Activated T-helper 2 cell treated with anti-CD3 and anti-CD28 coated beads, Interferon-gamma antibody, Interleukin-2, Interleukin-4, amounts not matched to agents 10 μg/mL and 5 μg/mL and 100 μg/mL, durations not matched to agents 14 hours and 24 hours and 36 hours (primary cell): ENCODE measurements at regions of chr2 and their contacts with region 1.

Region 1: DNA sequence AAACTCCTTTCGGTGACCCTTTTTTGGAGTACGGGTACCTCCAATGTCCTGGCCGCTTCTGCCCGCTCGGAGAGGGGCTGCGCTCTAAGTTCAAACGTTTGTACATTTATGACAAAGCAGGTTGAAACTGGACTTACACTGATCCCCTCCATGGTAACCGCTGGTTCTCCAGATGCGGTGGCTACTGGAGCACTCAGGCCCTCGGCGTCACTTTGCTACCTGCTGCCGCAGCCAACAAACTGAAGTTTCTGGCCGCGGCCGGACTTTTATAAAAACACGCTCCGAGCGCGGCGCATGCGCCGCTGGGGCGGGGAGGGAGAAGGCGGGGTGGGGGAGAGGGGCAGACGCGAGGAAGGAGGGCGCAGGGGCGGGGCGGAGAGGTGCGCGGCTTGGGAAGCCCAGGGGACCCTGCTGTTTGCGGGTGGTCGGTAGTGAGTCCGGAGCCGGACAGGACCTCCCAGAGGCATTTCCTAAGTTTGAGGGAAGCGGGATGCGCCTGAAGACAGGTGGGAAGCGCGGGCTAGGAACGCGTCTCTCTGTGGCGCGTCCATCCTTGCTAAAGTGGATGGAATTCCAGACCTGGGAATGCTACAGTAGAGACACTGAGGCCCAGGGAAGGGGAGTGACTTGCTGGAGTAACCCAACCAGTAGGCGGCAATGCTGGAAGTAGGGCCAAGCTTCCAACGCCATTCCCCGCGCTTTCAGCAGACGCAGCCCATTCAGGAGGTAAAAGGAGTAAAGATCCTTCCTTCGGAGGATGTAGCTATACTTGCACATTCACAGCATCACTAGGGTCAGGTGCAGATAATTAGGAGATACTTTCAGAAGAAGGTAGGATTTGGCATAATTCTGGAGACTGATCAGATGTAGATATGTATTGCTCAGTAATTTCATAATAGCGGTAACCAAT is at the start of gene CXCR4:
- DNase-seq: peak; percentile 81
- H3K4me3 Mint-ChIP-seq: peak within 1 kb of the TSS; percentile 97
- H3K27ac Mint-ChIP-seq: peak within 1 kb of the TSS; percentile 96
- H3K4me1 Mint-ChIP-seq: peaks cover 49% of the 10 kb centered on the region
- H3K27me3 Mint-ChIP-seq: peaks cover 21% of the 10 kb centered on the region
- total RNA-seq, gene CXCR4: 140 and 144 TPM in 2 replicates

Region 2: GRCh38 chr2:134918526-134919340 is 1199.4 kb before region 1 on chr2 and contains the start of gene CCNT2:
- intact Hi-C with region 1: loop called (anchors 5 kb)
- DNase-seq: peak; percentile 100
- H3K4me3 Mint-ChIP-seq: peak within 1 kb of the TSS; percentile 99
- H3K27ac Mint-ChIP-seq: peak within 1 kb of the TSS; percentile 98
- H3K4me1 Mint-ChIP-seq: peaks cover 20% of the 10 kb centered on the region
- H3K27me3 Mint-ChIP-seq: peaks cover 3% of the 10 kb centered on the region
- total RNA-seq, gene CCNT2: 39.2 and 41.0 TPM in 2 replicates

Region 3: GRCh38 chr2:135876066-135876711 is 242.0 kb before region 1 on chr2 and contains the start of gene MCM6:
- intact Hi-C with region 1: loop called (anchors 5 kb)
- DNase-seq: peak; percentile 98
- H3K4me3 Mint-ChIP-seq: peak within 1 kb of the TSS; percentile 95
- H3K27ac Mint-ChIP-seq: peak within 1 kb of the TSS; percentile 92
- H3K4me1 Mint-ChIP-seq: peaks cover 37% of the 10 kb centered on the region
- H3K27me3 Mint-ChIP-seq: no peaks in the 10 kb centered on the region
- total RNA-seq, gene MCM6: 190 and 191 TPM in 2 replicates

Region 4: DNA sequence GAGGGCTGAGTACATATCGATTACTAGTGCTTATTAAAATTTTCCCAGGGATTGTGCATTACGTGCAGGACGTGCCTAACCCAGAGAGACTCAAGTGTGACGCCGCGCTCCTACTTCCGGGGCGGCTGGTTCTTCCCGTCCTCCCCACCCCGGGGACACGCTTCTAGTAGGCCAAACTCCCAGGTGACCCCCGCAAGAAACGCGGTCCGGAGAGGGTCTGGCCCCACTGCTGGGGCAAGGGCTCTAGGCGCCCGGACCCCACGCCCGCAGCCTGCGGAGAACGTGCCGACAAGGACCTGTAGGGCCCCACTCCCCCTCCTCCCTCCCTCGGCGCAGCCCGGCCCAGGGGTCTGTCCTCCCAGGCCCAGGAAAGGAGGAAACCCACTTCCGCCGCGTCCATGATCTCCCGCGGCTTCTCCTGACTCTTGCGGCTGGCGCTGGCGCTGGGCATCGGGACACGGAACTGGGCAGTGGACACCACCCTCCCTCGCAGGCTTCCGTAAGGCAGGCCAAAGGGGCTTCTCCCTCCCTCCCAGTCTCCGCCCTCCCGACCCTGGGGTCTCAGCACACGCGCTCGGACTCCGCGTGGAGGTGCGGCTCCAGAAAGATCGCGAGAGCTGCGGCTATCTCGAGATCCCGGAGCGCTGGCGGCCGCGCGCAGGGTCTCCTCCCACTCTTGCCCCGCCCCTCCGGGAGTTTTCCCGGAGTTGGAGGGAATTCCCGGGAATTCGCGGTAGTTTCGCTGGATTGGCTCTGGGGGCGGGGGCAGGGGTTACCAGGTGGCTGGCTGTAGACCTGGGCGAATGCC is 132.9 kb before region 1 on chr2 and contains the start of gene DARS1:
- intact Hi-C with region 1: loop called (anchors 1 kb)
- DNase-seq: peak; percentile 80
- H3K4me3 Mint-ChIP-seq: peak within 1 kb of the TSS; percentile 94
- H3K27ac Mint-ChIP-seq: peak within 1 kb of the TSS; percentile 98
- H3K4me1 Mint-ChIP-seq: peaks cover 41% of the 10 kb centered on the region
- H3K27me3 Mint-ChIP-seq: no peaks in the 10 kb centered on the region
- total RNA-seq, gene DARS1: 179 and 183 TPM in 2 replicates

Region 5: DNA sequence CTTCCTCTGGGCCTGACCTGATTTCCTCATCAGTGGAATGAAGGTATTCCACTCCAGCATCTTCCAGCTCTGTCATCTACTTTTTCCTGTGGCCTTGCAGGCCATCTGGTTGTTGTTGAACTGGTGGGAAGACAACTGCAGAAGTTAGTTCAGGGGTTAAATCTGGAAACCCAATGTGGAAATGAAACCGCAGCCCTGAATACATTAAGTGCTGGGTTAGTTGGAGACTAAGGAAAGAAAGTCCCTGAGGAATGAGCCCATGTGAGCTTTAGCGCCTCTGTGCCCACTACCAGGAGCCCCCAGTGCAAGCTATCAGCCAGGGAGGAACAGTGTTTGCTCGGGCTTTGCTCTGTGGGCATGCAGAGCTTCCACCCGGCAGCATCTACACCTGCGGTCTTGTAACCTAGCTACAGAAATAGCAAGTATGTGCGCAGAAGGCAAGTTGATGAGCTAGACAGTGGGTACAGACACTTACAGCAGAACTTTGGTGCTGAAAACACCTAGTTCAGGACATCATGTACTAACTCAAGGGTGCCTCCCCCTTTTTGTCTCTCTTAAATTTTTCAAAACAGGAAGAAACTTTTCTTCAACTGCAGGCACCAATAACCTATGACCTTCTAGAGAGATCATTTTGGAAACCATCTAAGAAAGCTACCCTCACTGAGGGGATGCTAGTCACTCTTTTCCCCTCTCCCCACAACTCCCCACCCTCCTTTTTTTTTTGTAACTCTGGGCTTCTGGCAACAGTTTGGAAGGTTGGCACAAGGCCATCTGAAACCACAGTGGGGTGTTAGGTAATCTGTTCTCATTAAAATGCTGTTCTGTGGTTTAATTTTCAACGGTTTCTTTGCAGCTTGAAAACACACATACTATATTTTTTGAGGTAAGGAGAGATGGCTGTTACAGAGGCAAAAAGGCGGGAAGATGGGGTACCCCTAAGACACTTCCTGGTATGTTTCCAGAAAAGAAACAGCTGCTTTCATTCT is 18.1 kb after region 1 on chr2:
- intact Hi-C with region 1: loop called (anchors 1 kb)
- DNase-seq: peak; percentile 47
- H3K4me3 Mint-ChIP-seq: peak overlapping the region; percentile 13
- H3K27ac Mint-ChIP-seq: no peak overlapping the region
- H3K4me1 Mint-ChIP-seq: peaks cover 74% of the 10 kb centered on the region
- H3K27me3 Mint-ChIP-seq: peaks cover 33% of the 10 kb centered on the region

Region 6: DNA sequence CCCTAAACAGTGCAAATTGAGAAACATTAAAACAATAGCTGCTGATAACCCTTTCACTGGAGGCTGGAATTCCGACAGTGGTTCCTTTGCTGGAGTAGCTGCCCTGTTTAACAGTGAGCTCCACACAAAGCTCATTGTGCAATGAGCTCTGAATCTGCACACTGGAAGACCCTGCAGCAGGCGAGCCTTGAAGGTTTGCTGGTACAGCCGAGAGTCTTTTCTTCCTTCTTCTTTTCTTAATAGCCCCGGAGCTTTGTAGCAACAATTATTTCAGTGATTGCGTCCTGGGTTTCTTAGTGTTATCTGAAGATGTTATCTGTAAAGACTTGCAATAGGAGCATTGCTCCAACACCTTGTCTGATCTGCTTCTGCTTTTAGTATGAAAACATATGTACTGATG is 50.6 kb after region 1 on chr2:
- intact Hi-C with region 1: no loop called
- DNase-seq: no peak
- H3K4me3 Mint-ChIP-seq: no peak overlapping the region
- H3K27ac Mint-ChIP-seq: no peak overlapping the region
- H3K4me1 Mint-ChIP-seq: peaks cover 4% of the 10 kb centered on the region
- H3K27me3 Mint-ChIP-seq: peaks cover 2% of the 10 kb centered on the region

Region 7: GRCh38 chr2:136378712-136379595 is 260.8 kb after region 1 on chr2:
- intact Hi-C with region 1: loop called (anchors 1 kb)
- DNase-seq: peak; percentile 66
- H3K4me3 Mint-ChIP-seq: no peak overlapping the region
- H3K27ac Mint-ChIP-seq: no peak overlapping the region
- H3K4me1 Mint-ChIP-seq: peaks cover 82% of the 10 kb centered on the region
- H3K27me3 Mint-ChIP-seq: no peaks in the 10 kb centered on the region